CD4-positive, alpha-beta memory T cell (primary cell): ENCODE measurements at regions of chr10 and their contacts with region 1.

Region 1: GRCh38 chr10:70115948-70116682 is 16.5 kb downstream of the AIFM2 start:
- DNase-seq: peak; percentile 49 to 57 (median 55)
- H3K4me3 ChIP-seq: no peak overlapping the region
- H3K4me3 Mint-ChIP-seq: peak overlapping the region in 1 of 8 donors; percentile 49
- H3K27ac ChIP-seq: no peak overlapping the region
- H3K27ac Mint-ChIP-seq: peak overlapping the region in 1 of 7 donors; percentile 74
- H3K4me1 ChIP-seq: peaks cover 5% of the 10 kb centered on the region
- H3K4me1 Mint-ChIP-seq: peaks cover 0 to 7% (median 4%) of the 10 kb centered on the region in 4 donors
- H3K27me3 ChIP-seq: no peaks in the 10 kb centered on the region
- H3K27me3 Mint-ChIP-seq: no peaks in the 10 kb centered on the region

Region 2: DNA sequence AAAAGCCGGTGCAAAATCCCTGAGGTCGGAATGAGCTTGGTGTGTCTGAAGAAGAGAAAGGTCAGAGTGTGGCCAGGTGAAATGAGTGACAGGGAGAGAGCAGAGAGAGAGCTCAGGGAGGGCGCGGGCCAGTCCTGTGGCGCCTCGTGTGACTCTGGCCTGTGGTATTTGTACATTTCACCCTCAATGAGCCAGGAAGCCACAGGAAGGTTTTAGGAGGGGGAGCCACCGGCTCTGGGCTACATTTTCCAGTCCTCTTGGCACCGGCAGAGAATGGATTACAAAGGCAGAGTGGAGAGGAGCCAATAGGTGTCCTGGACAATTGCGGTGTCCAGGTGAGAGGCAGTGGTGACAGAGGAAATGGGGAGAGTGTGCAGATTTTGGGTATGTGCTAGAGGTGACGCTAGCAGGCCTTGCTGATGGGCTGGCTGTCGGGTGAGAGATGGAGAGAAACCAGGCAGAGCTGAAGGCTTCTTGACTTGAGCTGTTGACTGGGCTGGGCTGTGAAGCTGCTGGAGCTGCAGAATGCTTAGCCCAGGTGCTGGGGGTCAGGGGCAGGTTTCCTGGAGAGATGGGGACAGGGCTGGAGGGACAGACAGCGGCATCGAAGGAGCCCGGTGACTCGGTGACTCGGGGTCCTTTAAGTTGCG is 276.3 kb before region 1 on chr10:
- CTCF ChIA-PET with region 1: no interaction called
- POLR2A ChIA-PET with region 1: no interaction called
- intact Hi-C with region 1: no loop called
- DNase-seq: no peak
- H3K4me3 ChIP-seq: no peak overlapping the region
- H3K4me3 Mint-ChIP-seq: no peak overlapping the region
- H3K27ac ChIP-seq: no peak overlapping the region
- H3K27ac Mint-ChIP-seq: no peak overlapping the region
- H3K4me1 ChIP-seq: no peaks in the 10 kb centered on the region
- H3K4me1 Mint-ChIP-seq: no peaks in the 10 kb centered on the region
- H3K27me3 ChIP-seq: no peaks in the 10 kb centered on the region
- H3K27me3 Mint-ChIP-seq: peaks cover 5 to 14% of the 10 kb centered on the region in 2 donors

Region 3: DNA sequence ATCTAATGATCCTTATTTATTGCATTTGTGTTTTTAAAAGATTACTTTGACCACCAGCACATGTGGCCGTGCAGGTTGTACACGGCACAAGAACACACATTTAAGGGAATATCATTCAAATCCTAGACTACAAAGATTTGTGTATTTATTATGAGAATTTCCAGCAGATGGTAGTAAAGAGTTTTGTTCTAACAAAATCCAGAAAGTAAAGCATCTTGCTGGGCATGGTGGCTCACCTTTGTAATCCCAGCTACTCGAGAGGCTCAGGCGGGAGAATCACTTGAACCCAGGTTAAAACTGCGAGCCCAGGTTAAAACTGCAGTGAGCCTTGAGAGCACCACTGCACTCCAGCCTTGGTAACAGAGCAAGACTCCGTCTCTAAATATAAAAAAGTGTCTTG is 31.9 kb before region 1 on chr10:
- CTCF ChIA-PET with region 1: interaction called, 17 read pairs
- POLR2A ChIA-PET with region 1: no interaction called
- intact Hi-C with region 1: no loop called
- DNase-seq: peak in 3 of 5 donors; percentile 8 to 11 (median 9)
- H3K4me3 ChIP-seq: no peak overlapping the region
- H3K4me3 Mint-ChIP-seq: no peak overlapping the region
- H3K27ac ChIP-seq: no peak overlapping the region
- H3K27ac Mint-ChIP-seq: no peak overlapping the region
- H3K4me1 ChIP-seq: no peaks in the 10 kb centered on the region
- H3K4me1 Mint-ChIP-seq: no peaks in the 10 kb centered on the region
- H3K27me3 ChIP-seq: no peaks in the 10 kb centered on the region
- H3K27me3 Mint-ChIP-seq: no peaks in the 10 kb centered on the region

Region 4: GRCh38 chr10:70093335-70093944 is 22.7 kb before region 1 on chr10:
- CTCF ChIA-PET with region 1: interaction called, 92 read pairs
- POLR2A ChIA-PET with region 1: interaction called, 18 read pairs
- intact Hi-C with region 1: no loop called
- DNase-seq: peak; percentile 37 to 51 (median 44)
- H3K4me3 ChIP-seq: peak overlapping the region; percentile 26 to 62
- H3K4me3 Mint-ChIP-seq: peak overlapping the region; percentile 76 to 87 (median 84)
- H3K27ac ChIP-seq: peak overlapping the region; percentile 61
- H3K27ac Mint-ChIP-seq: peak overlapping the region; percentile 83 to 98 (median 94)
- H3K4me1 ChIP-seq: peaks cover 45% of the 10 kb centered on the region
- H3K4me1 Mint-ChIP-seq: peaks cover 25 to 46% (median 37%) of the 10 kb centered on the region in 4 donors
- H3K27me3 ChIP-seq: no peaks in the 10 kb centered on the region
- H3K27me3 Mint-ChIP-seq: no peaks in the 10 kb centered on the region

Region 5: DNA sequence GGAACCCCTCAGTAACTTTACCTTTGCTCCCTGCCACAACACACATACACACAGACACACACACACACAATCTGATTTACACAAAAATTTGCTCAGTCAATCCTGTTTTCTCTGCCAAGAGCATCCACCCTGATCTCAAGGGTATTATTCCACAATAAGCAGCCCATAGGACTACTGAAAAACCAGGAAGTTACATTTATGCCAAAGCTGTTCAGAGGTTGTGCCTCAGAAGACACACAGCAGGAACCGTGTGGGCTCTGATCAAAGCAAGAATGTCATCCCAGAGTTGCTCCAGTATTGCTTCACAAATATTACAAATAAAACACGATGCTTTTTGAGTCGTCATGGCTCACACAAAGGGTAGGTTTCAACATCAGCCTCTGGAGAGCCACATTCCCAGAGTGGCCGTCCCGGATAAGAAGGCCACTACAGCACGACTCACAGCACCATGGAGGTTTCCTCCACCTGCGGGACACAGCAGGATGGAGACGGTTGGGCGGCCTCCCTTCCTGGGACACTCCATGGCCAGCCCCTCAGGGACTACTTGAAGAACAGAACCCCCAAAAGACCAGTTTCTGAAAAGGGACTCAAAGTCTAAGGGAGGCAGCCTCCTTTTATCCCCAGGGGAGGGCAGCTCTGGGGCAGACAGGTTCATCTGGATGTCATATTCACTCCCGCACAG is 14.9 kb after region 1 on chr10:
- CTCF ChIA-PET with region 1: interaction called, 27 read pairs
- POLR2A ChIA-PET with region 1: no interaction called
- intact Hi-C with region 1: no loop called
- DNase-seq: no peak
- H3K4me3 ChIP-seq: no peak overlapping the region
- H3K4me3 Mint-ChIP-seq: peak overlapping the region in 4 of 8 donors; percentile 13 to 61 (median 24)
- H3K27ac ChIP-seq: no peak overlapping the region
- H3K27ac Mint-ChIP-seq: peak overlapping the region in 3 of 7 donors; percentile 51 to 60 (median 53)
- H3K4me1 ChIP-seq: peaks cover 11% of the 10 kb centered on the region
- H3K4me1 Mint-ChIP-seq: peaks cover 3 to 22% (median 11%) of the 10 kb centered on the region in 4 donors
- H3K27me3 ChIP-seq: no peaks in the 10 kb centered on the region
- H3K27me3 Mint-ChIP-seq: no peaks in the 10 kb centered on the region

Region 6: GRCh38 chr10:70137927-70138883 is 22.1 kb after region 1 on chr10:
- CTCF ChIA-PET with region 1: interaction called, 153 read pairs
- POLR2A ChIA-PET with region 1: no interaction called
- intact Hi-C with region 1: no loop called
- DNase-seq: no peak
- H3K4me3 ChIP-seq: no peak overlapping the region
- H3K4me3 Mint-ChIP-seq: no peak overlapping the region
- H3K27ac ChIP-seq: no peak overlapping the region
- H3K27ac Mint-ChIP-seq: no peak overlapping the region
- H3K4me1 ChIP-seq: peaks cover 3% of the 10 kb centered on the region
- H3K4me1 Mint-ChIP-seq: peaks cover 8 to 23% (median 16%) of the 10 kb centered on the region in 4 donors
- H3K27me3 ChIP-seq: no peaks in the 10 kb centered on the region
- H3K27me3 Mint-ChIP-seq: no peaks in the 10 kb centered on the region

Region 7: DNA sequence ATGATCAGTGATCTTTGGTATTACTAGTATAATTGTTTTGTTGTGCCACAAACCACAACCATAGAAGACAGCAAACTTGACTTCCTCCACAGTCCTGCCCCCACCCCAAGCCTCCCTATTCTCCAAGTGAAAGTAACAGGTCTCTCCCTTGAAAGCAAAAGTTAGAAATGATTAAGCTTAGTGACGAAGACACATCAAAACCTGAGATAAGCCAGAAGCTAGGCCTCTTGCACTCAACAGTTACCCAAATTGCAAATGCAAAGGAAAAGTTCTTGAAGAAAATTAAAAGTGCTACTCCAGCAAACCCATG is 46.7 kb after region 1 on chr10:
- CTCF ChIA-PET with region 1: interaction called, 3 read pairs
- POLR2A ChIA-PET with region 1: no interaction called
- intact Hi-C with region 1: loop called (anchors 1 kb)
- DNase-seq: peak; percentile 62 to 84 (median 71)
- H3K4me3 ChIP-seq: no peak overlapping the region
- H3K4me3 Mint-ChIP-seq: peak overlapping the region; percentile 26 to 83 (median 74)
- H3K27ac ChIP-seq: peak overlapping the region; percentile 29
- H3K27ac Mint-ChIP-seq: peak overlapping the region; percentile 19 to 78 (median 74)
- H3K4me1 ChIP-seq: peaks cover 69% of the 10 kb centered on the region
- H3K4me1 Mint-ChIP-seq: peaks cover 47 to 76% (median 62%) of the 10 kb centered on the region in 4 donors
- H3K27me3 ChIP-seq: no peaks in the 10 kb centered on the region
- H3K27me3 Mint-ChIP-seq: no peaks in the 10 kb centered on the region

Region 8: GRCh38 chr10:70197235-70197945 is 81.3 kb after region 1 on chr10:
- CTCF ChIA-PET with region 1: interaction called, 11 read pairs
- POLR2A ChIA-PET with region 1: no interaction called
- intact Hi-C with region 1: no loop called
- DNase-seq: peak in 1 of 5 donors; percentile 2
- H3K4me3 ChIP-seq: no peak overlapping the region
- H3K4me3 Mint-ChIP-seq: peak overlapping the region in 3 of 8 donors; percentile 13 to 49 (median 46)
- H3K27ac ChIP-seq: no peak overlapping the region
- H3K27ac Mint-ChIP-seq: peak overlapping the region in 2 of 7 donors; percentile 12 to 48
- H3K4me1 ChIP-seq: peaks cover 10% of the 10 kb centered on the region
- H3K4me1 Mint-ChIP-seq: peaks cover 4 to 12% (median 10%) of the 10 kb centered on the region in 4 donors
- H3K27me3 ChIP-seq: no peaks in the 10 kb centered on the region
- H3K27me3 Mint-ChIP-seq: no peaks in the 10 kb centered on the region

Region 9: DNA sequence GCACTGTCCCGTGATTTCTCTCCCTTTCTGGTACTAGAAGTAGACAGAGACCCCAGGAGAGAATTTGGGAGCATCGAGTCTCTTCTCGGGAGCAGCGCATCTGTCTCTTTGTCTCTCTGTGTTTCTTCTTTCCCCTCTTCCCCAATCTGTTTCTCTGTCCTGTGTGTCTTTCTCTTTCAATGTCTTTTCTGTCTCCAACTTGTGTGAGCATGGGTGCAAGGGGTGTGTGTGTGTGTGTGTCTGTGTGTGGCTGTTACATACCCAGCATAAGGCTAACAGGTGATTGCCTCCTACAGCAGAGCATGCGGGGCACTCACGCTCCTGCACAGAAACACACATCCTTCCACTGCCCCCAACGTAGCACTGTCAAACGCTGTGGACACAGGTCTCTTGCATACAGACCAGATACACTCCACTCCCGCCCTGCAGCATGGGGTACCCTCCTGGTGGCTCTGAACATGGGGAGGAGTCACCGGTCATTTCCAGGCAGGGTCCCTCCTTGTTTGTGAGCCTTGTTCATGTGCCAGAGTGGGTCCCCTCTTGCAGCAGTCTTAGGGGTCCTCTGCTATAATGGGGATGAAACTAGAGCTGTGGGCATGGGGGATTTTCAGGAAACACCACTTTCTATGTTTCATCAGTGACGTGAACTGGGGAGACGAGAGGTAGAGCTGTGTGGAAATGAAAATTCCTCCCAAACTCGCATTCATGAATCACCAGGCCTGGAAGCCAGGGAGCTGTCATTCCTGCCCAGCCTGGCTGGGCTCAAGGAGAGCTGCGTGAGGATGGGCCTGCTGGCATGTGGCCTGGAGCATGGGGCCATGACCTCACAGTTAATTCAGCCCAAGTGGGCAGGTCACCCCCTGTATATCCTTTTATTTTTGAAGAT is 557.2 kb after region 1 on chr10:
- CTCF ChIA-PET with region 1: no interaction called
- POLR2A ChIA-PET with region 1: no interaction called
- intact Hi-C with region 1: no loop called
- DNase-seq: no peak
- H3K4me3 ChIP-seq: no peak overlapping the region
- H3K4me3 Mint-ChIP-seq: peak overlapping the region in 6 of 8 donors; percentile 28 to 70 (median 60)
- H3K27ac ChIP-seq: no peak overlapping the region
- H3K27ac Mint-ChIP-seq: no peak overlapping the region
- H3K4me1 ChIP-seq: no peaks in the 10 kb centered on the region
- H3K4me1 Mint-ChIP-seq: peaks cover 6 to 17% (median 11%) of the 10 kb centered on the region in 4 donors
- H3K27me3 ChIP-seq: peaks cover 5% of the 10 kb centered on the region
- H3K27me3 Mint-ChIP-seq: peaks cover 25 to 31% of the 10 kb centered on the region in 2 donors